Posterior cingulate gyrus (tissue), 11 donors: ENCODE measurements at regions of chr14 and their contacts with region 1.

Region 1: GRCh38 chr14:100239840-100240724 is 1.1 kb downstream of the YY1 start:
- DNase-seq: peak; percentile 60 to 95 (median 71)

Region 2: DNA sequence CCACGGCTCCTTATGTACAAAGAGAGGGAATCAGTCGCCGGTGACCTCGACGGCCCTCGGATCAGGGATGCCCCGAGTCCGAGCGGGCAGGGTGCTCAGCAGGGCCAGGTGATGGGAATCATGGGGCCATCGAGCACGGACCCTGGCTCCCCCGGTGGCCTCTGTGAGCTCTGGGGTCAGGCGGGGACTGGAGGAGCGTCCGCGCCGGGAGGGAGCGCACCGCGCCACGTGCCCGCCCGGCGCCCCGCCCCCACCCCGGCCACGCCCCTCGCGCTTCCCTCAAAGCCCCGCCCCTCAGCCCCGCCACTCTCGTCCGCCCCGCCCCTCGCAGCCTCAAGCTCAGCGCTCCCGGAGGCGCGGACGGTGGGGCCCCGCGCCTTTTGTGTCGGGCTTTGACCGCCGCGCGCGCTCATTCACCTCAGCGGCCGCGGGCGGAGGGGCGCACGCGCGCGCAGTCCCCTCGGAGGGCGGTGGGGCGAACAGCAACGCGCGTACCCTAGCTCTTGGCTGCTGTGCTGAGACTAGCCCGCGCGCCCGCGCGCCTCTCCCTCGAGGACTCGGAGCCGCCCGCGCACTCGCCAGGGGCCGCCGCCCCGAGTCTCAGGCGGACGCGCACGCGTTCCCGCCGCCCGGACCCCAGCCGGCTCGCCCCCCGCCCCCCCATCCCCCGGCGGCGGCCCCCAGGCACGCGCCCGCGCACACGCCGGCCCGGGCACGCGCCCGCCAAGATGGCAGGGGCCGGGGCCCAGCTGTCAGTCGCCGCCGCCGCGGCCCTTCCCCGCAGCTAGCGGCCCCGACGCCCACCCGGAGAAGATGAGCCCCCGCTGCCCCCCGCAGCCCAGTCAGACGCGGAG is 268.8 kb before region 1 on chr14:
- intact Hi-C with region 1: loop called (anchors 2 kb)
- DNase-seq: peak; percentile 66 to 97 (median 80)

Region 3: DNA sequence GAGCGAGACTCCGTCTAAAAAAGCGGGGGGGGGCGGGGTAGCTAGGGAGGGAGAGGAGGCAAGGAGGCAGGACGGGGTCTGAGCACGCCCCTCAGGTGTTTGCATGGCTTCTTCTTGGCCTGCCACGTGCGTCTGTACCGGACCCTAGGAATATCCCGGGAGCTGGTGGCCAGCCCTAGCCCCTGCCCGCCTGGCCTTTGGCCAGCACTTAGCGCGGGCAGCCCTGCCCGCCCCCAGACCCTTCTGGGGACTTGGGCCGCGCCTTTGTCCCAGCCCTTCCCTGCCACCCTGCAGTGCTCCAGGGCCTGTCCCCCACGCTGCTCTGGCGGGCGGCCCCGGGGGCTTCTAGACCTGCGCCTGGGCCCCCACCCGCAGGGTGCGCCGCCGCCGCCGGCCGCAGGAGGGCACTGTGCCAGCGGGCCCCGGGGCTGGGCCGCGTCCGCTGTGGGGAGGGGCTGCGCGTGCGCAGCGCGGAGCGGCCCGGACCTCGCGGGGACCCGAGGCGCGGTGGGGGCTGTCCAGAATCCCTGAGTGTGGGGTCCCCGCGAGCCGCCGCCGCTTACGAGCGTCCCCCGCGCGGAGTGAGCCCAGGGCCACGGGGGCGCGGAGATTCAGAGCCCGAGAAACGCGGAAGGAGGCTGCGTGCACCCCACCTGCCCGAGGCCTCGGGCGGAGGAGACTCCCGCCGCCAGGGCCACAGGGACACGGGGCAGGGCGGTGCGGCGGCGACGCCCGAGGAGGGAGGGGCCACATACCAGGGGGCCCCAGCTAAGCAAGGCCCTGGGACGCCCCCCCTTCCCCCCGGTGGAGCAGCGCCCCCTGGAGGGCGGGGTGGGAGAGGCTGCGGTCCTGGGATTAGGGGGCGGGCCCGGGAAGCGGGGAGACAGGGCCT is 45.2 kb after region 1 on chr14:
- intact Hi-C with region 1: loop called (anchors 1 kb)
- DNase-seq: peak in 7 of 10 donors; percentile 51 to 95 (median 76)

Region 4: GRCh38 chr14:100306420-100307219 is 66.5 kb after region 1 on chr14 and contains the start of gene SLC25A29:
- intact Hi-C with region 1: loop called (anchors 5 kb)
- DNase-seq: peak; percentile 86 to 99 (median 91)

Region 5: GRCh38 chr14:100375963-100376735 is 136.1 kb after region 1 on chr14:
- intact Hi-C with region 1: loop called (anchors 2 kb)
- DNase-seq: peak; percentile 83 to 98 (median 89)

Region 6: GRCh38 chr14:100610511-100611217 is 370.6 kb after region 1 on chr14:
- intact Hi-C with region 1: no loop called
- DNase-seq: peak in 4 of 10 donors; percentile 1 to 60 (median 32)